ENCODE measurements at regions of chr6 and their contacts with region 1.

Region 1: DNA sequence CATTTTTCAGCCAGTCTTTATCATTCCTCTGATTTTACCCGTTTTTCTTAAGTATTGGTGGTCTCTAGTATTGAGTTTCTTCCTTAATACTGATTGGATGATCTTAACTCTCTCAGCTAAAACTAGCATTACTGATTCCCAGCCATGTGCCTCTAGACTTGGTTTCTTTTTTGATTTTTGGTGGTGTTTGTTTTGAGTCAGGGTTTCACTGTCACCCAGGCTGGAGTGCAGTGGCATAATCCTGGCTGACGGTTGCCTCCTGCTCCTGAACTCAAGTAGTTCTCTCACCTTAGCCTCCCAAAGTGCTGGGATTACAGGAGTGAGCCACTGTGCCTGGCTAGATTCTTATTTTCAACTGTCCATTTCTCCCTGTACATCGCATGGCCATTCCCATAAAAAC is 24.9 kb downstream of the DPPA5 start:
- DNase-seq: no peak
- ATAC-seq: no peak
- H3K4me3 ChIP-seq: no peak overlapping the region
- H3K4me3 Mint-ChIP-seq: no peak overlapping the region
- H3K27ac ChIP-seq: no peak overlapping the region
- H3K27ac Mint-ChIP-seq: no peak overlapping the region
- H3K4me1 ChIP-seq: no peaks in the 10 kb centered on the region
- H3K4me1 Mint-ChIP-seq: no peaks in the 10 kb centered on the region
- H3K27me3 ChIP-seq: no peaks in the 10 kb centered on the region
- H3K27me3 Mint-ChIP-seq: peaks cover 33% of the 10 kb centered on the region
- CTCF ChIP-seq: no peak

Region 2: GRCh38 chr6:71533939-71534379 is 1795.2 kb before region 1 on chr6:
- CTCF ChIA-PET with region 1: no interaction called
- POLR2A ChIA-PET with region 1: no interaction called
- intact Hi-C with region 1: loop called in 1 of 2 experiments (anchors 5 kb)
- DNase-seq: peak in 1 of 14 experiments; percentile 5
- ATAC-seq: no peak
- H3K4me3 ChIP-seq: no peak overlapping the region
- H3K4me3 Mint-ChIP-seq: no peak overlapping the region
- H3K27ac ChIP-seq: no peak overlapping the region
- H3K27ac Mint-ChIP-seq: no peak overlapping the region
- H3K4me1 ChIP-seq: no peaks in the 10 kb centered on the region
- H3K4me1 Mint-ChIP-seq: no peaks in the 10 kb centered on the region
- H3K27me3 ChIP-seq: no peaks in the 10 kb centered on the region
- H3K27me3 Mint-ChIP-seq: peaks cover 13% of the 10 kb centered on the region
- CTCF ChIP-seq: peak; percentile 62

Region 3: DNA sequence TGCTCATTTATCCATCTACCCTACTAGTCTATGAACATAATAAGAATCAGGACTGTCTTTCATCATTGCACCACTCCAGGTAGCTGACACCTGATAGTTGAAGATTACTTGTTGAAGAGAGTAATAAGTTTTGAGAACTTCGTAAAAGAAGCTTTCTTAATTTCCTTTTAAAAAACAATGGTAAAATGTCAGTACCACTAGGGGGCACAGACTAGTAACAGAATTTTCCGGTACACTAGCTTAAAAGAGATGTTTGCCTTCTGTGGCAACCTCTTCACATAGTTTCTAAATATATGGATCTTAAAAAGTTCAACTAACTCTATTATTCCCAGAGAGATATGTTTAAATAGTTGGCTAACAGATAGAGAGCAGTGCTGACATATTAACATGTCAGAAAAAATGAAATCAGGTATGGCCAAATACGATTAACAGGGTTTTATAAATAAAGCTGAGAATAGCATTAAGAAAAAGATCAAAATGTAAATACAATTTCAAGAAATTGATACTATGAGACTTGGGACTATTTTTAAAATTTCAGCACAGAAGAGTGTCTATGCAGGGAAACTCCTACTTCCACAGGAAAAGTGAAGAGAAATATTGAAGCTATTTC is 712.7 kb before region 1 on chr6:
- CTCF ChIA-PET with region 1: no interaction called
- POLR2A ChIA-PET with region 1: no interaction called
- intact Hi-C with region 1: loop called (anchors 2 to 5 kb)
- DNase-seq: peak in 3 of 14 experiments; percentile 45 to 63 (median 54)
- ATAC-seq: no peak
- H3K4me3 ChIP-seq: no peak overlapping the region
- H3K4me3 Mint-ChIP-seq: peak overlapping the region; percentile 23
- H3K27ac ChIP-seq: no peak overlapping the region
- H3K27ac Mint-ChIP-seq: peak overlapping the region; percentile 4
- H3K4me1 ChIP-seq: peaks cover 23% of the 10 kb centered on the region
- H3K4me1 Mint-ChIP-seq: peaks cover 43% of the 10 kb centered on the region
- H3K27me3 ChIP-seq: no peaks in the 10 kb centered on the region
- H3K27me3 Mint-ChIP-seq: peaks cover 13% of the 10 kb centered on the region
- CTCF ChIP-seq: peak; percentile 63

Region 4: DNA sequence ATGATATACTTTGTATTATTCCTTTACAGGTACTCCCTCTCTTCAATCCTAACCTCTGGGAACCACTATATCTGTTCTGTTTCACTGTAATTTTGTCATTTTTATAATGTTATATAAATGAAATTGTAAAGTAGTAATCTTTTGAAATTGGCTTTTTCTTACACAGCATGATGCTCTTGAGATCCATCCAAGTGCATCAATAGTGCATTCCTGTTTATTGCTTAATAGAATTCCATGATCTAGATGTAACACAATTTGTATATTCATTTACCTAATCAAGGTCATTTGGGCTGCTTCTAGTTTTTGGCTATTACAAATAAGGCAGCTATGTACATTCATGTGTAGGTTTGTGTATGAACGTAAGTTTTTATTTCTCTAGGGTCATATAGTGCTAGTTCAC is 278.5 kb before region 1 on chr6:
- CTCF ChIA-PET with region 1: no interaction called
- POLR2A ChIA-PET with region 1: no interaction called
- intact Hi-C with region 1: no loop called
- DNase-seq: no peak
- ATAC-seq: no peak
- H3K4me3 ChIP-seq: no peak overlapping the region
- H3K4me3 Mint-ChIP-seq: no peak overlapping the region
- H3K27ac ChIP-seq: no peak overlapping the region
- H3K27ac Mint-ChIP-seq: no peak overlapping the region
- H3K4me1 ChIP-seq: no peaks in the 10 kb centered on the region
- H3K4me1 Mint-ChIP-seq: no peaks in the 10 kb centered on the region
- H3K27me3 ChIP-seq: no peaks in the 10 kb centered on the region
- H3K27me3 Mint-ChIP-seq: peaks cover 4% of the 10 kb centered on the region
- CTCF ChIP-seq: no peak

Region 5: DNA sequence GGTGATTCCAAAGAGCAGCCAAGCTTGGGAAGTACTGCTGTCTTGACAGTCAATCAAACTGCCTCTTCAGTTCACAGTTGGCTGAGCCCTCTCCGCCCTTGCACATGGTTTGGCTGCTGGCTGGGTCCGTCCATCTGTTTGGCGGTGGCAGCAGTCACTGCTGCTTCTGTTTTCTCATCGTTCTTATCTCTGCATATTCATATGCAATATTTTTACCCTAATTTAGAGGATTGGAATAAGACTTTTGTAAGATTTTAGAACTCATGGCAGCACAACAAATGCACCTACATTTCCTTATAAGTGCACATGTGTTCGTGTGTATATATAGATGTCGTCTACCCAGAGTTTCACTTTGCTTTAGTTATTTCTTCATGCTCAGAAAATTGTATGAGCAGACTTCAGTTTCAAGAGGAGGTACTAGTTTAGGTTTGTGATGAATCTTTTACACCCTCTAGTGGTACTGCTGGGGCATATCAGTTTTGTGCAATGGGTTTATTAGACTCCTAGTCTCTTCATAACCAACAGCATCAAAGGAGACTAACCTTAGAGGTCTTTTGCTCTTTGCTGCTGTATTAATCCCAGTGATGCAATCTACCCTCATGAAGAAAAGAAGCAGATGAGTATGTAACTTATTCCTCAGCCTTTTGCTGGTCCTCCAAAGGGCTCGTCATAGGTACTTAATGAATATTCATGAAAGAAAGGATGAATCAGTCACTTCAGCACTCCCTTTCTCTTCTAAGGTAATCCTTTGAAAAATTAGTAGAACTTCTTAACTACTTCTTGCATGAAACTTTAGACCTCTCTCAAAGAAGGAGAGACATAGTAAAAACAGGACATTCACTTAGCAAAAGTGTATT is 148.2 kb before region 1 on chr6:
- CTCF ChIA-PET with region 1: no interaction called
- POLR2A ChIA-PET with region 1: no interaction called
- intact Hi-C with region 1: loop called in 1 of 2 experiments (anchors 10 kb)
- DNase-seq: peak in 4 of 14 experiments; percentile 5 to 60 (median 58)
- ATAC-seq: peak; percentile 67
- H3K4me3 ChIP-seq: no peak overlapping the region
- H3K4me3 Mint-ChIP-seq: peak overlapping the region; percentile 16
- H3K27ac ChIP-seq: no peak overlapping the region
- H3K27ac Mint-ChIP-seq: no peak overlapping the region
- H3K4me1 ChIP-seq: peaks cover 3% of the 10 kb centered on the region
- H3K4me1 Mint-ChIP-seq: no peaks in the 10 kb centered on the region
- H3K27me3 ChIP-seq: no peaks in the 10 kb centered on the region
- H3K27me3 Mint-ChIP-seq: no peaks in the 10 kb centered on the region
- CTCF ChIP-seq: peak; percentile 80